ENCODE measurements at regions of chr1 and their contacts with region 1.

Region 1: GRCh38 chr1:8970870-8971337 is 25.2 kb downstream of the CA6 start:
- DNase-seq: no peak
- ATAC-seq: no peak
- H3K4me3 ChIP-seq: no peak overlapping the region
- H3K27ac ChIP-seq: no peak overlapping the region
- H3K4me1 ChIP-seq: no peaks in the 10 kb centered on the region
- H3K27me3 ChIP-seq: no peaks in the 10 kb centered on the region
- CTCF ChIP-seq: no peak

Region 2: DNA sequence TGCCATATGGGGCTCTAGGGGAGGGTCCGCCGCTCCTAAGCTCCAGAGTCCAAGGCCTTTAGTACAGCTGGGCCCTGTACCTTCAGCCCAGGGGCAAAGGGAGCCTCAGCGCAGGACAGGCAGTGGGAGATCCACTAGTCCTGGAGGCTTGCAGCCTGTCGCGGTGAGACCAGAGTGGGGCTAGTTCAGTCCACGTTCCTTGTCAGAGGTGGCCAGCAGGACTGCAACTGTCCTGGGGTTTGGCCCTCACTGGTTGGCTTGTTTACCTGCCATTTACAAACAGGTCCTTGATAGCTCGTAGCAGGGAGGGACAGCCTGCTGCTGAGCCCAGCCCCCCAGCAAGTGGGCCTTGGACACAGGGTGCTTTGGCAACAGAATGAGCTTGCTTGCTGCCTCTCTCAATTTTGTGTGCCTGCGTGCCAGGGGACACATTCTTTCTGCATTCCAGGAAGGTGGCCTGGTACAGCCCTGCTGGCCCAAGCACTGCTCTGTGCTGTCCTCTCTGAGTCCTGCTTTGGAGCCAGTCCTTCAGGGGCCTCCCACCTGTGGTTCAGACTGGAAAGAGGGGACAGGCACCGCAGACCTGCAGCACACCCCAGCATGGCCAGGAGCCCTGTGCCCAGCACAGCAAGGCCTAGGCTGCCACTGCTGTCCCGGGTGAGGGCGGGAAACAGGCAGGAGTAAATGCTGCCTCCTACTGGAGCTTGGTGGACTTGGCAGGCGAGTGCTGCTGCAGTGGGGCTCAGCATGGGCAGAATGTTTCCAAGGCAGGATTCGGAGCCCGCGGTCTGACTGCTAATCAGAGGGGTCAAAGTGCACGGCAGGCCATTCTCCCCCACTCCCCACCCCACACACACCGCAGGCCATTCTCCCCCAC is 278.9 kb after region 1 on chr1:
- CTCF ChIA-PET with region 1: interaction called, 10 read pairs
- POLR2A ChIA-PET with region 1: no interaction called
- intact Hi-C with region 1: no loop called
- DNase-seq: peak; percentile 43
- ATAC-seq: peak; percentile 54; the same call in 1 of the 2 replicates
- H3K4me3 ChIP-seq: no peak overlapping the region
- H3K27ac ChIP-seq: no peak overlapping the region
- H3K4me1 ChIP-seq: no peaks in the 10 kb centered on the region
- H3K27me3 ChIP-seq: no peaks in the 10 kb centered on the region
- CTCF ChIP-seq: peak; percentile 60

Measured in PC-3 (cell line).